GM23248 (cell line): ENCODE measurements at regions of chr1 and their contacts with region 1.

Region 1: DNA sequence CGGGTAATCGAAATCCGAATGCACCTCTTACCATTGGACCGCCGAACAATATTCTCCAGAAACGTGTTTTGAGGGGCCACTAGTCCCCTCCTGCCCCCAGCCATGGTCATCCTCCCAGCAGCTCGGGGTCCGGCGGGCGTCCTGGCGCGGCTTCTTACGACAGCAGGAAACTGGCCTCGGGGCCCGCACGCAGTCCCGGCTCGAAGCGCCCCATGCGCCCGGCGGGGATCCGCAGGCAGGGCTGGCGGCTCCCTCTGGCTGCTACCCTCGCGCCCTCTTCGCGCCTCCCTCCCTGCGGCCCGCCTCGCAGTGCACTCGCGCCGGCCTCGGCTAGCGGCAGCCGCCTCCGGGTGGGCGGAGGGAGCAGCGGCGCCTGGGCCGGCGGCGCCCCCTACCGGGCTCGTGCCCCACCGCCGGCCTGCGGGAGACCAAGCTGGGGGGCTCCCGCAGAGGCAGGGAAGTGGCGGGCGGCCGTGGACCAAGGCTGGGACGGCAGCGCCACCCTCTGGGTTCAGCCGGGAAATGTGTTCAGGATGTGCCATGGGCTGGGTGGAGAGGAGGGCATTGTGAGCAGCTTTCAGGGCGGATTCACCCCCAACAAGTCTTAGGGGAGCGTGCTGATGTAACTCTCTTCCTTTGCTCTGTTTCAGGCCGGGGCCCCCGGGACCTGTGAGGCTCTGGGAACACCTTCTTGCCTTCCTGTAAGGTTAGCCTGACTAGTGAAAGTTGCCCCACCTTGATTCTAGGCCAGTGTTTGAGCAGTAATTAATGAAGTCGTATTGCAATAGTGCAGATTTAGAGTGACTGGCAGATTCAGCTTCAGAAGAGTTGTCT is at the start of gene KCNH1:
- DNase-seq: peak; percentile 87
- H3K4me3 ChIP-seq: peak within 1 kb of the TSS; percentile 71
- H3K27ac ChIP-seq: no peak within 1 kb of the TSS
- H3K4me1 ChIP-seq: no peaks in the 10 kb centered on the region
- H3K27me3 ChIP-seq: peaks cover 50% of the 10 kb centered on the region
- total RNA-seq, gene KCNH1: 1.5 and 1.8 TPM in 2 replicates

Region 2: GRCh38 chr1:210455840-210456603 is 678.0 kb before region 1 on chr1:
- in situ Hi-C with region 1: loop called (anchors 10 kb)
- DNase-seq: no peak
- H3K4me3 ChIP-seq: no peak overlapping the region
- H3K27ac ChIP-seq: no peak overlapping the region
- H3K4me1 ChIP-seq: no peaks in the 10 kb centered on the region
- H3K27me3 ChIP-seq: peaks cover 21% of the 10 kb centered on the region

Region 3: GRCh38 chr1:210571356-210572284 is 562.4 kb before region 1 on chr1:
- in situ Hi-C with region 1: loop called (anchors 10 kb)
- DNase-seq: no peak
- H3K4me3 ChIP-seq: no peak overlapping the region
- H3K27ac ChIP-seq: no peak overlapping the region
- H3K4me1 ChIP-seq: no peaks in the 10 kb centered on the region
- H3K27me3 ChIP-seq: no peaks in the 10 kb centered on the region